Gastrocnemius medialis (tissue), 4 donors: ENCODE measurements at regions of chr12 and their contacts with region 1.

Region 1: GRCh38 chr12:83158613-83159207 is 472.0 kb downstream of the TMTC2 start:
- DNase-seq: no peak
- ATAC-seq: no peak
- H3K4me3 ChIP-seq: no peak overlapping the region
- H3K27ac ChIP-seq: no peak overlapping the region
- H3K4me1 ChIP-seq: no peaks in the 10 kb centered on the region
- H3K27me3 ChIP-seq: no peaks in the 10 kb centered on the region
- CTCF ChIP-seq: no peak
- POLR2A ChIP-seq: no peak

Region 2: DNA sequence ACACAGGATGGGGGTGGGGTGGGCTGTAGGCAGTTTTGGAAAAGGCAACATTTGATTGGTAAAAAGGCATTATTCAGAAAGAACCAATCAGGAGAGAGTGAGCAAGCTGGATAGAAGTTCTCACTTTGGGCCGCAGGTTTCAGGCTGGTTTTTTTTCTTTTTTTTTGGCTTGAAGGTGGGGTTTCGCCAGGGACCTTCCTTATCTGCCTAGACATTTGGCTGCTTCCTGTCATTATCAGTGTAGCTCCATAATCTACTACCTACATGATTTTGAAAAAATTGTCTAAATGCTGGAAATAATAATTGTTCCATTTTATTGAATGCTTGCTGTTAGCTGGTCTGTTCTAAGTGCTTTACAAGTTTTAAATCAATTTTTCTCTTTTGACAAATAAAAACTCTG is 177.0 kb after region 1 on chr12:
- in situ Hi-C with region 1: no loop called
- intact Hi-C with region 1: loop called (anchors 5 kb)
- DNase-seq: no peak
- ATAC-seq: no peak
- H3K4me3 ChIP-seq: no peak overlapping the region
- H3K27ac ChIP-seq: no peak overlapping the region
- H3K4me1 ChIP-seq: no peaks in the 10 kb centered on the region
- H3K27me3 ChIP-seq: no peaks in the 10 kb centered on the region
- CTCF ChIP-seq: no peak
- POLR2A ChIP-seq: no peak